Dendritic cell treated with granulocyte-macrophage colony-stimulating factor and Interleukin-4, amounts not matched to agents 40 ng/mL and 50 ng/mL, for 4 days (primary cell): ENCODE measurements at regions of chr3 and their contacts with region 1.

Region 1: GRCh38 chr3:161409069-161409468 is 37.8 kb upstream of the SPTSSB start:
- H3K4me3 Mint-ChIP-seq: no peak overlapping the region
- H3K27ac Mint-ChIP-seq: no peak overlapping the region
- H3K4me1 Mint-ChIP-seq: peaks cover 7% of the 10 kb centered on the region
- H3K27me3 Mint-ChIP-seq: peaks cover 2% of the 10 kb centered on the region

Region 2: GRCh38 chr3:161305095-161305991 is 103.7 kb before region 1 on chr3:
- intact Hi-C with region 1: loop called (anchors 10 kb)
- H3K4me3 Mint-ChIP-seq: no peak overlapping the region
- H3K27ac Mint-ChIP-seq: no peak overlapping the region
- H3K4me1 Mint-ChIP-seq: peaks cover 20% of the 10 kb centered on the region
- H3K27me3 Mint-ChIP-seq: peaks cover 5% of the 10 kb centered on the region

Region 3: DNA sequence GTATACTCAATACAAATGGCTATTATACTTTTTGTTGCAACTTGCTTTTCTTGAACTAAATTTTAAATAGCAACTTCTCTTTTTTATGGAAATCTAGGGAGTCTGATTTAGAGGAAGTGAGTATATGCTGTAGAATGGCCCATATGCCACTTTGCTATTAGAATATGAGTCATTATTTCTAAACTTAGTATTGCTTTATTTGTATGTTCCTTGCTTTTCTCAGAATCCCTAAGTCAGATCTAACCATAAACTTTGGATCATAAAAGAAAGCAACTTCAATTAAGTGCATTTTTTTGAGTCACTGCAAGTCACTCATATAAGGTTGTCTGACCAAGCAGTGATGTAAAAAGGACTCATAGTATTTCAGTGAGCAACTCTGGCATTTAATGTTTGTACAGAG is 20.2 kb before region 1 on chr3:
- intact Hi-C with region 1: no loop called
- H3K4me3 Mint-ChIP-seq: no peak overlapping the region
- H3K27ac Mint-ChIP-seq: peak overlapping the region; percentile 52
- H3K4me1 Mint-ChIP-seq: peaks cover 56% of the 10 kb centered on the region
- H3K27me3 Mint-ChIP-seq: no peaks in the 10 kb centered on the region